ENCODE measurements at regions of chr1 and their contacts with region 1.

Region 1: DNA sequence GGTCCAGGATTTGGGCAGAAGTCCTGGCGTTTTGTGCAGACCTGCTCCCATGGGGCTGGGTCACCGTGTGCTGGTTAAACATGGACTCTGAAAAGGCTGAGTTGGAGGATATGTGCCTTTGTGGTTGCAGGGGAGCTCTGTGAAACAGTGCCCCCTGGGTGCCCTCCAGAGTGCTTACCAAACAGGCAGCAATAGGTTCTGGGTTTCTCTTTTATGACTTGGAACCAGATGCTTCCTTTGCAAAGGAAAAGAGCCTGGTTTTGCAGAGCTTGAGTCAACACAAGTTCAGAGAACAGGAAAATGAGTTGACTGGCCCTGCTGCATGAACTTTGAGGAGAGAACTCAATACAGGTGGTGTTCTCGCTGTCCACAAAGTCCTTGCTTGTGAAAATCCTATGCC is 288.9 kb downstream of the TM2D1 start:
- DNase-seq: no peak
- H3K4me3 ChIP-seq: no peak overlapping the region
- H3K27ac ChIP-seq: no peak overlapping the region
- H3K4me1 ChIP-seq: peaks cover 0 to 14% (median 0%) of the 10 kb centered on the region in 4 experiments; a peak in 3 of 7 replicates
- H3K27me3 ChIP-seq: no peaks in the 10 kb centered on the region
- CTCF ChIP-seq: peak; percentile 42 to 63 (median 45)
- EP300 ChIP-seq: no peak
- POLR2A ChIP-seq: no peak
- RAD21 ChIP-seq: peak; percentile 50 to 54

Region 2: GRCh38 chr1:61403679-61404596 is 32.1 kb before region 1 on chr1:
- CTCF ChIA-PET with region 1: interaction called, 10 read pairs
- POLR2A ChIA-PET with region 1: no interaction called
- DNase-seq: no peak
- H3K4me3 ChIP-seq: no peak overlapping the region
- H3K27ac ChIP-seq: no peak overlapping the region
- H3K4me1 ChIP-seq: no peaks in the 10 kb centered on the region; a peak in 1 of 7 replicates
- H3K27me3 ChIP-seq: no peaks in the 10 kb centered on the region
- CTCF ChIP-seq: no peak
- EP300 ChIP-seq: no peak
- POLR2A ChIP-seq: no peak
- RAD21 ChIP-seq: no peak

Measured in H1 (cell line).